ENCODE measurements at regions of chr17 and their contacts with region 1.

Region 1: GRCh38 chr17:73371285-73371684 is 59.5 kb upstream of the CDC42EP4 start:
- DNase-seq: no peak
- H3K4me3 ChIP-seq: no peak overlapping the region
- H3K27ac ChIP-seq: no peak overlapping the region
- H3K4me1 ChIP-seq: peaks cover 6 to 8% of the 10 kb centered on the region in 2 experiments; a peak in 2 of 4 replicates
- H3K27me3 ChIP-seq: 0 out of 2 replicates have a peak, but pooled peaks cover 14% of the 10 kb centered on the region
- CTCF ChIP-seq: no peak
- EP300 ChIP-seq: no peak
- RAD21 ChIP-seq: no peak

Region 2: GRCh38 chr17:73192894-73193701 is 178.2 kb before region 1 on chr17 and contains the start of gene COG1:
- CTCF ChIA-PET with region 1: interaction called, 88 read pairs
- POLR2A ChIA-PET with region 1: no interaction called
- DNase-seq: peak; percentile 100
- H3K4me3 ChIP-seq: peak within 1 kb of the TSS; percentile 73 to 76
- H3K27ac ChIP-seq: peak within 1 kb of the TSS; percentile 85 to 95
- H3K4me1 ChIP-seq: peaks cover 5 to 8% of the 10 kb centered on the region in 2 experiments; a peak in 2 of 4 replicates
- H3K27me3 ChIP-seq: no peaks in the 10 kb centered on the region
- CTCF ChIP-seq: no peak
- EP300 ChIP-seq: no peak
- RAD21 ChIP-seq: no peak
- polyA plus RNA-seq, gene COG1: 52.8 and 53.1 TPM in 2 replicates

Region 3: DNA sequence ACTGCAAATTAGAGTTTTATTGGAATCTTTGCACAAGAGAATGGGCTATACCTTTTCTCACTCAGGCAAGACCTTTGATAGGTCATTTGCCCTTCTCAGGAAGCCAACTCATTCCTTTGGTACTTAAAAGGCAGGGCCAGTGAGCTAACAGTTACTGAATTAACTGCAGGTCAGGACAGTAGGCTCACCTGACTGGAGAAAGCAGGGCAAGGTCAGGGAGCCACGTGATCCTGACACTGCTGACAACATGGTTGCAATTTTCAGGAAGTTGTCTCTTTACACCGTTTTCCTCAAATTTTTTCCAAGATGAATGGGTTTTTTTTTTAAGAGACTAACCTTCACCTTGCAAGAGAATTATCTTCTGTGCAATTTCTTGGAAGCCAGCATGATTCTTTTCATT is 130.7 kb before region 1 on chr17:
- CTCF ChIA-PET with region 1: interaction called, 18 read pairs
- POLR2A ChIA-PET with region 1: no interaction called
- DNase-seq: no peak
- H3K4me3 ChIP-seq: no peak overlapping the region
- H3K27ac ChIP-seq: no peak overlapping the region
- H3K4me1 ChIP-seq: peaks cover 0 to 3% of the 10 kb centered on the region in 2 experiments; a peak in 1 of 4 replicates
- H3K27me3 ChIP-seq: no peaks in the 10 kb centered on the region
- CTCF ChIP-seq: no peak
- EP300 ChIP-seq: no peak
- RAD21 ChIP-seq: no peak

Region 4: DNA sequence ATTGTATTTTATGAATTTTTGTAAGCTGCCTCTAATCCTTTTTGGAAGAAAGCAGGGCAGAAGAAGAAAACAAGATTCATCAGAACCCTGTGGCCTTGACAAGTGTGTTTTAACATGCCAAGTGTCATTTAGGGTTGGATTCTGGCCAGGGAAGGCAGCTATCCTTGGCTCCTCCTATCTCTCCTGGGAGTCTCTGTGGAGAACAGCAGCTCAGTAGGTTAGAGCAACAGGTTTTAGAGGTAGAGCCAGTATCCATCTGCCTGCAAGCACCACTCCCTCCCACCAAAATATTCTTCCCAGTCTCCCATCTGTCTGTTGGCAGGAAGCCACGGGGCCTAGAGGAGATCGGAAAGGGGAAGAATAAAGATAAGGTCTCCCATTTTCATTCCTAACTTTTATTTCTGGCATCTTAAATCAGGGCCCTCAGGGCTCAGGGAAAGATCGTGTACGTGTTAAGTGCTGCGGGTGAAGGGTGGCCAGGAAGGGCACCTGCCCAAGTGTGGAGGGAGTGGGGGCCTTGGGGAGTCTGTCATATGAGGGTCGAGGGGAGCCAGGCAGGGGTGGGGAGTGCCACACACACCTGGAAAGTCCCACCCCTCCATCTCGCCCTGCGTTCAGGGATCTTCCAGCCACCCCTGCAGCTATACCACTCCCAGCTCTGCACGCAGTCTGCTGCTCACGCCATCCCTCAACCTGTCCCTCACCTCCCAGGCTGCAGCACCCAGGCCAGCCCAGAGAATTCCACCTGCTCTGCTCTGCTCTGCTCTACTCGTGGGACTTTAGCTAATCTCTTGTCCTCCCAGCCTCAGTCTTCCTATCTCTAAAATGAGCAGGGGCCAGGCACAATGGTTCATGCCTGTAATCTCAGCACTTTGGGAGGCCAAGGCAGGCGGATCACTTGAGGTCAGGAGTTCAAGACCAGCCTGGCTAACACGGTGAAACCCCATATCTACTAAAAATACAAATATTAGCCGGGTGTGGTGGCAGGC is 92.5 kb before region 1 on chr17:
- CTCF ChIA-PET with region 1: interaction called, 30 read pairs
- POLR2A ChIA-PET with region 1: no interaction called
- DNase-seq: peak; percentile 76
- H3K4me3 ChIP-seq: no peak overlapping the region
- H3K27ac ChIP-seq: no peak overlapping the region; a peak in 1 of 4 replicates
- H3K4me1 ChIP-seq: peaks cover 9 to 26% of the 10 kb centered on the region in 2 experiments
- H3K27me3 ChIP-seq: no peaks in the 10 kb centered on the region
- CTCF ChIP-seq: no peak
- EP300 ChIP-seq: peak in 1 of 2 experiments; percentile 25; a peak in 1 of 4 replicates
- RAD21 ChIP-seq: no peak

Region 5: DNA sequence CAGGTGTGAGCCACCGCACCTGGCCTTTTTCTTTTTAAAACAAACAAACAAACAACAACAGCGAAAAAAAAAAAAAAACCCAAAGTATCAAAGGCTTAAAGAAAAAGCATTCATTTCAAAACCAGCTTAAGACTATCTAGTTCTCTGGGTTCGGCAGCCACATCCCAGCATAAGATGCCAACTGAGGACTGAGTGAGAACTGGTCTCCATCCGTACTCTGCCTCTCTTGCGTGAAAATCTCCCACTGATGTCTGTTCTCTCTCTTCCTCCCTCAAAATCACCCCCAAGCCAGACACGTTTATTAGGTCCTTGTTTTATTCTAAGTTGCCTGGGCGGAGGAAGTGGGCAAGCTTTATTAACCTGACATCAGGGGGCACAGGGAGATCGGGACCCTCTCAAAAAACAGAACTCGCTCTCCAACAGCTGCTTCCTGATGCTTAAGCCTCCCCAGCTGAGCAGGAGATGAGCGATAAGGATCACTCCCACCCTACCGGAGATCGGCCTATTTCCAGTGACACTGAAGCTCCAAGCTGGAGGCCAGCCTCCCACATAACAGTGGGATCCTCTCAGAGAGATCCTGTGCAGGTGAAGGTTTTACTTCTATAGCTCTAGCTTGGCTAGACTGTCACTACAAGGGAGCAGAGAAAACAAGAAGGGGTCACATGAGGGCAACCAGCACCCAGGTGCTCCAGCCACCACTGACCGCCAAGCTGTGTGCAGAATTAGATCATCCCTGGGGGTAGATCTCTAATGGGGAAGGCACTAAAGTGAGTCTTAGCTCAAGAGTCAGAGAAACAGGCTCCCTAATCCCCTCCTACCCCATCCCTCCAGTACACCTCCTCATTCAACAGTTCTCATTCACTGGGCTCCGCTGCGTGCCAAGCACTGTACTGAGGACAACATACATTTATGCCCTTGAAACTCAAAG is 73.1 kb before region 1 on chr17:
- CTCF ChIA-PET with region 1: interaction called, 21 read pairs
- POLR2A ChIA-PET with region 1: no interaction called
- DNase-seq: peak; percentile 73
- H3K4me3 ChIP-seq: no peak overlapping the region
- H3K27ac ChIP-seq: peak overlapping the region; percentile 11 to 51; a peak in 3 of 4 replicates
- H3K4me1 ChIP-seq: peaks cover 42 to 46% of the 10 kb centered on the region in 2 experiments
- H3K27me3 ChIP-seq: no peaks in the 10 kb centered on the region
- CTCF ChIP-seq: no peak
- EP300 ChIP-seq: peak in 1 of 2 experiments; percentile 36; a peak in 1 of 4 replicates
- RAD21 ChIP-seq: 0 out of 2 replicates have a peak, but pooled peaks have one; percentile 3

Region 6: GRCh38 chr17:73316919-73317505 is 54.3 kb before region 1 on chr17:
- CTCF ChIA-PET with region 1: interaction called, 154 read pairs
- POLR2A ChIA-PET with region 1: interaction called, 30 read pairs
- DNase-seq: no peak
- H3K4me3 ChIP-seq: no peak overlapping the region
- H3K27ac ChIP-seq: peak overlapping the region in 1 of 2 experiments; percentile 48; a peak in 2 of 4 replicates
- H3K4me1 ChIP-seq: peaks cover 6 to 40% of the 10 kb centered on the region in 2 experiments; a peak in 3 of 4 replicates
- H3K27me3 ChIP-seq: no peaks in the 10 kb centered on the region
- CTCF ChIP-seq: no peak
- EP300 ChIP-seq: no peak
- RAD21 ChIP-seq: no peak

Region 7: GRCh38 chr17:73359987-73360410 is 11.3 kb before region 1 on chr17:
- CTCF ChIA-PET with region 1: interaction called, 23 read pairs
- POLR2A ChIA-PET with region 1: interaction called, 11 read pairs
- DNase-seq: peak; percentile 63
- H3K4me3 ChIP-seq: no peak overlapping the region
- H3K27ac ChIP-seq: no peak overlapping the region
- H3K4me1 ChIP-seq: peaks cover 0 to 59% of the 10 kb centered on the region in 2 experiments; a peak in 1 of 4 replicates
- H3K27me3 ChIP-seq: 0 out of 2 replicates have a peak, but pooled peaks cover 7% of the 10 kb centered on the region
- CTCF ChIP-seq: no peak
- EP300 ChIP-seq: no peak
- RAD21 ChIP-seq: no peak

Region 8: GRCh38 chr17:73770115-73770848 is 399.0 kb after region 1 on chr17:
- CTCF ChIA-PET with region 1: no interaction called
- POLR2A ChIA-PET with region 1: no interaction called
- DNase-seq: peak; percentile 88
- H3K4me3 ChIP-seq: no peak overlapping the region; a peak in 1 of 4 replicates
- H3K27ac ChIP-seq: peak overlapping the region in 1 of 2 experiments; percentile 86; a peak in 3 of 4 replicates
- H3K4me1 ChIP-seq: peaks cover 0 to 53% of the 10 kb centered on the region in 2 experiments; a peak in 2 of 4 replicates
- H3K27me3 ChIP-seq: no peaks in the 10 kb centered on the region
- CTCF ChIP-seq: no peak
- EP300 ChIP-seq: peak in 1 of 2 experiments; percentile 77; a peak in 2 of 4 replicates
- RAD21 ChIP-seq: no peak

Measured in SK-N-SH (cell line).